Activated T-helper 2 cell treated with anti-CD3 and anti-CD28 coated beads, Interferon-gamma antibody, Interleukin-2, Interleukin-4, amounts not matched to agents 10 μg/mL and 5 μg/mL and 100 μg/mL, durations not matched to agents 14 hours and 24 hours and 36 hours (primary cell): ENCODE measurements at regions of chr12 and their contacts with region 1.

Region 1: GRCh38 chr12:12582895-12583303 is 20.2 kb upstream of the DUSP16 start:
- DNase-seq: peak; percentile 19
- H3K4me3 Mint-ChIP-seq: no peak overlapping the region
- H3K27ac Mint-ChIP-seq: peak overlapping the region; percentile 86
- H3K4me1 Mint-ChIP-seq: peaks cover 57% of the 10 kb centered on the region
- H3K27me3 Mint-ChIP-seq: no peaks in the 10 kb centered on the region

Region 2: GRCh38 chr12:12403264-12404248 is 179.3 kb before region 1 on chr12:
- intact Hi-C with region 1: loop called (anchors 1 kb)
- DNase-seq: no peak
- H3K4me3 Mint-ChIP-seq: peak overlapping the region; percentile 49
- H3K27ac Mint-ChIP-seq: peak overlapping the region; percentile 90
- H3K4me1 Mint-ChIP-seq: peaks cover 58% of the 10 kb centered on the region
- H3K27me3 Mint-ChIP-seq: no peaks in the 10 kb centered on the region

Region 3: DNA sequence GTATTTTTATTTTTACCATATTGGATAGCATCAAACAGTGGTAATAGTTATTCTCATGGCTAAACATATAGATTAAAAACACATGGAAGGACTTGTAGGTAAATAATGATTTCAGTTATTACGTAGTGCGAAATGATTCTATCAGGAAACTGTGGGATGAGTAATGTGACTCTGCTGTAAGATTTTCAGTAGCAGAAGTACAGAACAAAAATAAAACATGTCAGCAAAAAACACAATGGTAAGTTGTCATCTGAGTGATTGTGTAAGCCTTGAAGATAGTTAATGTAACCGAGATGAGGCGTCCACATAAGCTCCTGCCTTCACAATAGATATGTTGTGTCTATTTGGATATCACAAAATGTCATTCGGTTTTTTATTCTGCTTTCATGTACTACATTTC is 126.3 kb before region 1 on chr12:
- intact Hi-C with region 1: loop called (anchors 2 kb)
- DNase-seq: no peak
- H3K4me3 Mint-ChIP-seq: peak overlapping the region; percentile 55
- H3K27ac Mint-ChIP-seq: peak overlapping the region; percentile 96
- H3K4me1 Mint-ChIP-seq: peaks cover 55% of the 10 kb centered on the region
- H3K27me3 Mint-ChIP-seq: no peaks in the 10 kb centered on the region

Region 4: DNA sequence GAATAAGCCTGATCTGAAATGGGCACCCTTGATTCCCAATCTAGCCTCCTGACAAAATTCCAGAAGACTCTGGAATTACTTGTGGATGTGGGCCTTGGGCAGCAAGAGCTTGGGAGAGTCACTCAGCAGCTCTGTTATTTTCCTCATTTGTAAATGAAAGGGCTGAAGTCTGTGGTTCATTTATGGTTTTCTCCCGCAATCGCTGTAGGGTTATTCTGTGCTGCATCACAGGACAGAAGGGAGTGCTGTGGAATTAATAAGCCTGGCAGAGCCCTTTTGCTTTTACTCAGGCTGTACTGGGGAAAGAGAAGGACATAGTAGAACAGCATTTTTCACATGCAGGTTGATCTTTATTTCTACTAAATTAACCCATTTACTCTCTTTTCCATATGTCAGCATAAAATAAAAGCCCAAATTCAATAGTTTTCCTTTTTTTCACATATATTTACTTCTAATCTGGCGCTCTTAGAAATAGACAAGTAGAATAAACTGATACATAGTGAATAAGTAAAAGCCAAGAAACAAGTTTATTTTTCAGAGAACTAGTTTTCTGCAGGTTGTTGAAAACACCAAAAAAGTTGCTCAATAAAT is 69.4 kb before region 1 on chr12:
- intact Hi-C with region 1: loop called (anchors 2 kb)
- DNase-seq: no peak
- H3K4me3 Mint-ChIP-seq: no peak overlapping the region
- H3K27ac Mint-ChIP-seq: no peak overlapping the region
- H3K4me1 Mint-ChIP-seq: peaks cover 22% of the 10 kb centered on the region
- H3K27me3 Mint-ChIP-seq: no peaks in the 10 kb centered on the region

Region 5: GRCh38 chr12:12654691-12655460 is 72.0 kb after region 1 on chr12:
- intact Hi-C with region 1: loop called (anchors 5 kb)
- DNase-seq: no peak
- H3K4me3 Mint-ChIP-seq: no peak overlapping the region
- H3K27ac Mint-ChIP-seq: no peak overlapping the region
- H3K4me1 Mint-ChIP-seq: peaks cover 7% of the 10 kb centered on the region
- H3K27me3 Mint-ChIP-seq: no peaks in the 10 kb centered on the region